ENCODE measurements at regions of chr2 and their contacts with region 1.

Region 1: GRCh38 chr2:99180755-99181623 is at the starts of genes MITD1 and MRPL30:
- DNase-seq: peak; percentile 84
- CTCF ChIP-seq: no peak

Region 2: GRCh38 chr2:98608116-98608999 is 572.6 kb before region 1 on chr2 and contains the starts of genes COA5 and UNC50:
- in situ Hi-C with region 1: no loop called
- DNase-seq: peak; percentile 98
- CTCF ChIP-seq: peak; percentile 7

Region 3: GRCh38 chr2:99489761-99490622 is 309.0 kb after region 1 on chr2 and contains the start of gene REV1:
- in situ Hi-C with region 1: loop called (anchors 25 kb)
- DNase-seq: peak; percentile 99
- CTCF ChIP-seq: peak; percentile 76